ENCODE measurements at regions of chr2 and their contacts with region 1.

Region 1: GRCh38 chr2:120312861-120313694 is 32.9 kb upstream of the INHBB start:
- DNase-seq: peak; percentile 85
- ATAC-seq: peak; percentile 78
- H3K4me3 Mint-ChIP-seq: peak overlapping the region; percentile 68
- H3K27ac Mint-ChIP-seq: peak overlapping the region; percentile 68
- H3K4me1 Mint-ChIP-seq: peaks cover 51% of the 10 kb centered on the region
- H3K27me3 Mint-ChIP-seq: no peaks in the 10 kb centered on the region

Region 2: DNA sequence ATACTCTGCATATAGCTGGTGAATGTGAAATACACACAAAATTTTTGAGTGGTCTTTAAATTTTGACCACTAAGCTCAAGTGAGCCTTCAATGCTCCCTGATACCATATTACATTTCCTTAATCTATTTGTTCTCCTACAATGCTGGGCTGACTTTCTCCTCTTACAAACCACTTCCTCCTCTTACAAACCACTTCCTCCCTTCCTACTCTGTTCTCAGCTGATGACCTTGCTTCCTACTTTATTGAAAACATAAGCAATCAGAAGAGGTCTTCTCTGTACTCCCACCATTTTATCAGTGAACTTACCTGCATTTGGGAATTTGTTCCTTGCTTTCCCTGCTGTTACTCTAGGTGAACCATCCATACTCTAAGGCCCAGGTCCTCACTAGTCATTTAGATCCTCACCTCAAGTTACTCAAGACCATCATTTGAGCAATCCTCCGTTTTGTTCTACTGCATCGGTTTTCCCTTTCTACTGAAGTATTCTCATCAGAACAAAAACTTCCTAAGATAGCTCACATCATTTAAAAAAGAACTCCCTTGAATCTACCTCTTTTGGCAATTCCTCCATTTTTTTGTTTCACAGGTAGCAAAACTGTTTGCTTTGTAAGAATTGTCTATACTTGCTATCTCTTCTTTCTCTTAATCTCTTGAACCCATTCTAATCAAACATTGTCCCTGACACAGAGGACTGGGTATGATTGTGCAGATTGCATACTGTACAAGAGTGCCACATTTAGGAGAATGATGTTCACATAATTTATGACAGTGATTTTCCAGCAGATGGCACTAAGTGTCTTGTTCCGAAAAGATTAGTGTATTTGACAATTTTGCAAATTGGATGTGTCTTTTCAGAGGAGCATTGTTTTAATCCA is 203.7 kb before region 1 on chr2:
- CTCF ChIA-PET with region 1: interaction called, 42 read pairs
- POLR2A ChIA-PET with region 1: no interaction called
- DNase-seq: peak; percentile 48
- ATAC-seq: peak; percentile 89
- H3K4me3 Mint-ChIP-seq: peak overlapping the region; percentile 56
- H3K27ac Mint-ChIP-seq: peak overlapping the region; percentile 75
- H3K4me1 Mint-ChIP-seq: peaks cover 21% of the 10 kb centered on the region
- H3K27me3 Mint-ChIP-seq: no peaks in the 10 kb centered on the region

Region 3: DNA sequence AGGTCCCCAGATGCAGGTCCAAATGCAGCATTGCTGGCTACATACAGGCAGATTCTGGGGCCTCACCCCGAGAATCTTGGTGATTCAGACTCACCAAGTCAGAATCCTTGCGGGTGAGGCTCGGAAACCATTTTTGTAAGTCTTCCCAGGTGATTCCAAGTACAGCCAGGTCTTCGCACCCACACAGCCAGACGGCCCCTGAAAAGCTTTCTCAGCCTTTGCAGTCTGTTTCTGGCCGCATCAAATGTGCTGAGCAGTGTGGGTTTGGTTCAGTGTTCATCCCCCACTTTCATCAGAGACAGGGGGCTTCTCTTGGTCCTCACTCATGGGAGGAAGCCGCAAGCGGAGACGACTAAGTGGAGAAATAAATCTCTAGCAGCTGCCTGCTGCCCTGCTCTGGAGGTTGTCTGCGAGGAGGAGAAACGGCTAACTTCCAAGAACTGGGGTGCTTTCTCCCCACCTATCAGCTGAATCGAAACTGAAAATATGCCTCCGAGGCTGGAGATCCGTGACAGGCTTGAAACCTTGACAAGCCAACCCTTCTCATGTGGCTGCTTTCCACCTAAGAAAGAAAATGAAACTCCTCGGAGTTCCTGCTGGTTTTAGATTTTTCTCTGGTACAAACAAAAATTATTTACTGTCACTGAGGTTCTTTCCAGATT is 81.0 kb before region 1 on chr2:
- CTCF ChIA-PET with region 1: interaction called, 36 read pairs
- POLR2A ChIA-PET with region 1: interaction called, 4 read pairs
- DNase-seq: peak; percentile 91
- ATAC-seq: peak; percentile 91
- H3K4me3 Mint-ChIP-seq: peak overlapping the region; percentile 99
- H3K27ac Mint-ChIP-seq: peak overlapping the region; percentile 99
- H3K4me1 Mint-ChIP-seq: peaks cover 55% of the 10 kb centered on the region
- H3K27me3 Mint-ChIP-seq: no peaks in the 10 kb centered on the region

Region 4: GRCh38 chr2:120257522-120257921 is 55.6 kb before region 1 on chr2:
- CTCF ChIA-PET with region 1: interaction called, 26 read pairs
- POLR2A ChIA-PET with region 1: interaction called, 4 read pairs
- DNase-seq: no peak
- ATAC-seq: no peak
- H3K4me3 Mint-ChIP-seq: no peak overlapping the region
- H3K27ac Mint-ChIP-seq: peak overlapping the region; percentile 22
- H3K4me1 Mint-ChIP-seq: peaks cover 47% of the 10 kb centered on the region
- H3K27me3 Mint-ChIP-seq: no peaks in the 10 kb centered on the region

Region 5: DNA sequence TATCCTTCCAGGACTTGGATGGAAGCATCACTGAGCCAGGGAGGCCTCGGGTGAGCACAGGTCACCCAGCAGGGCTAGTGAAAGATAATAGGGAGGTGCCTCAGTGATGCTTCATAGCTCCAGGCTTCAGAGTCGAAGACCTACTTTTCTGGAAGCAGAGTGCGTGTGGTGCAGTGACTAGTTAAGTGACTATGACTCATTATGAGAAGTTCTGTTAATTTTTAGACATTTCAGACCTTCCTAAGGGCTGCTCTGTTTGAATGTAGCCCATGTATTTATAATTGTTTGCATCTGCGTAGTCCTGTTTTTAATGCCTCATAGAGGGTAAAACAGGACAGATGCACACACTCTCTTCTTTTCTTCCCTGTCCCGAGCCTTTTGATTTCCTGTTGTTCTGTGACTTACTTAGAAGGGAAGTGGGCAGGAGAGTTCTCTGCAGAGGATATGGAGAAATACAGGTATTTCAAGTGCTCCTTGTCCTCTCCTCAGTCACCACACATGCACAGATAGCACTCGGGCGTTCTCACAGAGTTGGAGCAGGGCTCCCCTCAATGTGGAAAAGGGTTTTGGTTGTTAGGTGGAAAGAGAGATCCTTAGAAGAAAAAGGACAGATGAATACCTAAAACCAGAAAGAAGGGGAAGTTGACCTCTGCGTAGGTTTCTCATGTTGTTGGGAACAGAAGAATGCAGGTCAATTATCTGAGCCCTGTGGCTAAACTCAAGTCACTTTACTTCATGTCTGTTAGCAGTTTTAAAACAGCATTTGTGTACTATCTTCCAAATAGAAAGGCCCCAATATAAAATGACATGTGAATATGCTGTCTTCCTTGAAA is 25.7 kb before region 1 on chr2:
- CTCF ChIA-PET with region 1: interaction called, 38 read pairs
- POLR2A ChIA-PET with region 1: no interaction called
- DNase-seq: no peak
- ATAC-seq: peak; percentile 72
- H3K4me3 Mint-ChIP-seq: peak overlapping the region; percentile 30
- H3K27ac Mint-ChIP-seq: peak overlapping the region; percentile 82
- H3K4me1 Mint-ChIP-seq: peaks cover 51% of the 10 kb centered on the region
- H3K27me3 Mint-ChIP-seq: no peaks in the 10 kb centered on the region

Region 6: GRCh38 chr2:120323807-120324399 is 10.8 kb after region 1 on chr2:
- CTCF ChIA-PET with region 1: interaction called, 15 read pairs
- POLR2A ChIA-PET with region 1: interaction called, 3 read pairs
- DNase-seq: no peak
- ATAC-seq: no peak
- H3K4me3 Mint-ChIP-seq: no peak overlapping the region
- H3K27ac Mint-ChIP-seq: no peak overlapping the region
- H3K4me1 Mint-ChIP-seq: peaks cover 7% of the 10 kb centered on the region
- H3K27me3 Mint-ChIP-seq: peaks cover 6% of the 10 kb centered on the region